GM18951 (cell line): ENCODE measurements at regions of chr11 and their contacts with region 1.

Region 1: DNA sequence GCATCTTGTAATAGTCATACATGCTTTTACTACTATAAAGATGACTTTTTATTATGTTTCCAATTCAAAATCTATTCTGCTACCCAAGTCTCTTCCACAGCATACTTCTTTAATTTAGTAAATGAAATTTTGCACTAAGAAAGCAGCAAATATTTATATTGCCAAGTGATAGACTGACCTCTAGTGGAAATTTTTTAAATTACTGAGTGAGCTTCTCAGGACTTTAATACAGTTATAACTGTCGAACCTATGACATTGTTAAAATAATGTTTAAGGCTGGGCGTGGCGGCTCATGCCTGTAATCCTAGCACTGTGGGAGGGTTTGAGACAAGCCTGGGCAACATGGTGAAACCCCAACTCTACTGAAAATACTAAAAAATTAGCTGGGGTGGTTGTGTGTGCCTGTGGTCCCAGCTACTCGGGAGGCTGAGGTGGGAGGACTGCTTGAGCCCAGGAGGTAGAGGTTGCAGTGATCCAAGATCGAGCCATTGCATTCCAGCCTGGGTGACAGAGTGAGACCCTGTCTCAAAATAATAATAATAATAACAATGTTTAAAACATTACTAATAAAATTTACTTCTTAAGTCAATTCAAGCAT is 27.3 kb downstream of the STK33 start:
- POLR2A ChIP-seq: no peak

Region 2: GRCh38 chr11:8225589-8226036 is 341.1 kb before region 1 on chr11:
- in situ Hi-C with region 1: loop called (anchors 25 kb)
- POLR2A ChIP-seq: no peak

Region 3: DNA sequence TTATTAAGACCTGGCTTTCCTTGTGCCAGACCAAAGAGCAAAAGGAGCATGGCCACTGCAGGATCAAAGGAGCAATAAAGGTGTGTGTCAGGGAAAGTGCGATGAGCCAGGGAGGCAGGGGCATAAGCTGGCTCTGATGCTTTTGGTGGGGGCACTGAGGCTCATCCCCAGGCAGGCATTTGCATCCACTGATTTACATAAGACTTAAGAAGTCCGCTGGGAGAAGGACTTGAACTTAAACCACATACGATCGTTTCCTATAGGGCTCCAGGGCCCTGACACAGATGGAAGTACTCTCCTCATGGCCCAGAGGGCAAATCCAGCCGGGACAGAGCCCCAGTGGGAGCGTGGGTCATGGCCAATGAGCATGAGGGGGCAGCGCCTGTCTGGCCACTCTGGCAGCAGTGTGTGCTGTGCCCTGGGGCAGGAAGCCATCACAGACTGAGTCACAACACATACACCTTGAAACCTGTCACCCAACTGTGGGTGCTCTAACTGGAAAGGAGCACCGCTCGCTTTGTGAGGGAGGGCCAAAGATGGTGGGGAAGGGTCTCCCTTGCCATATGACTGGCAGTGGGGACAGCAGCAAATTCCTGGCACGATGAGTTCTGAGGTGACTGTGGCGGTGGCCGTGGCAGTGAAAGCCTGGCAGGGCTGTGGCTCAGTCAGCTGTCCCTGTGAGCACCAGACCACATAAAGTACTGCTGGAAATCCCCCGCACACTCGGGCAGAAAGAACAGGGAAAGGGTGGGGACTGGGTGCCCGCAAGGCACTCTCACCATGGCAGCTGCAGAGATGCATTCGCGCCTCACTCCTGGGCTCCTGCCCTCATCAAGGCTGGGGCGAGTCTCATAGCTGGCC is 223.7 kb before region 1 on chr11:
- in situ Hi-C with region 1: loop called (anchors 10 kb)
- POLR2A ChIP-seq: peak; percentile 33

Region 4: GRCh38 chr11:8671193-8671612 is 104.5 kb after region 1 on chr11:
- in situ Hi-C with region 1: no loop called
- POLR2A ChIP-seq: no peak